A673 (cell line): ENCODE measurements at regions of chr1 and their contacts with region 1.

Region 1: GRCh38 chr1:164780863-164781262 is 221.9 kb downstream of the PBX1 start:
- DNase-seq: peak; percentile 9
- H3K4me3 ChIP-seq: no peak overlapping the region
- H3K27ac ChIP-seq: no peak overlapping the region
- H3K4me1 ChIP-seq: peaks cover 10% of the 10 kb centered on the region
- H3K27me3 ChIP-seq: no peaks in the 10 kb centered on the region
- CTCF ChIP-seq: no peak

Region 2: DNA sequence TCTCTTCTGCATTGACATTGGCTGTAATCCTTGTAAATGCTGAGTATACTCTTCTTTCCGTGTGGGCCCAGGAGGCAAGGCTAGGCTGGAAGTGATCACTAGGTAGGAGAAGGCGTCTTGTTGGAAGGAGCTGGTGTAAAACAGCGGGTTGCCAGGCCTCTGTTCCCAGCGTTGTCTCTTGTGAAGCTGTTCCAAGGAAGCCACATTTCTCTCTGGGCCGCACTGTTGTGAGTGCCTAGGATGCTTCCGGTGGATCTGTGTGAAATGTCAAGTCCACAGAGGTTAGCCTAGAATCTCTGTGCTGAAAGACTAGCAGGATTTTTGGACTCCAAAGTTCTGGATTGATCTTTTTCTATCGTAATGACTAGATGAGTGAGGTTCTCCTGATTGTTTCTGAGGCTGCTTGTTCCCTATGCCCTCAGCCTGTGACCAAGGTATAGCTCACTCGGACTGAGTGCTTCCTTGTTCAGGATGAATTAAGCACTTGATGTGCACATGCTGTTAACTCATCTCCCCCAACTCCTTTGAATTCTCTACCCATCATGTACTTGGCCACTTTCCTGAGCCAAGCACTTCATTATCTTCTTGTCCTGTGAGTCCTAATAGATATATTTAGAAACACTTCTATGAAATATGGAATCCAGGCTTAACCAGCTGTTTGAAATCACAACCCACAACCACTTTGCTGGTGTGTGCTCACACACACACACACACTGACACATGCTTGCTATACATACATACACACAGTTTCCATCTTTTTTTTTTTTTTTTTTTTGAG is 158.6 kb before region 1 on chr1:
- CTCF ChIA-PET with region 1: no interaction called
- POLR2A ChIA-PET with region 1: no interaction called
- intact Hi-C with region 1: loop called (anchors 5 kb)
- DNase-seq: no peak
- H3K4me3 ChIP-seq: no peak overlapping the region
- H3K27ac ChIP-seq: no peak overlapping the region
- H3K4me1 ChIP-seq: peaks cover 31% of the 10 kb centered on the region
- H3K27me3 ChIP-seq: no peaks in the 10 kb centered on the region
- CTCF ChIP-seq: no peak

Region 3: GRCh38 chr1:164726235-164726634 is 54.6 kb before region 1 on chr1:
- CTCF ChIA-PET with region 1: no interaction called
- POLR2A ChIA-PET with region 1: no interaction called
- intact Hi-C with region 1: no loop called
- DNase-seq: no peak
- H3K4me3 ChIP-seq: no peak overlapping the region
- H3K27ac ChIP-seq: no peak overlapping the region
- H3K4me1 ChIP-seq: peaks cover 16% of the 10 kb centered on the region
- H3K27me3 ChIP-seq: no peaks in the 10 kb centered on the region
- CTCF ChIP-seq: no peak

Region 4: GRCh38 chr1:165204548-165204947 is 423.7 kb after region 1 on chr1:
- CTCF ChIA-PET with region 1: no interaction called
- POLR2A ChIA-PET with region 1: no interaction called
- intact Hi-C with region 1: no loop called
- DNase-seq: no peak
- H3K4me3 ChIP-seq: no peak overlapping the region
- H3K27ac ChIP-seq: no peak overlapping the region
- H3K4me1 ChIP-seq: no peaks in the 10 kb centered on the region
- H3K27me3 ChIP-seq: no peaks in the 10 kb centered on the region
- CTCF ChIP-seq: no peak